ENCODE measurements at regions of chr1 and their contacts with region 1.

Region 1: DNA sequence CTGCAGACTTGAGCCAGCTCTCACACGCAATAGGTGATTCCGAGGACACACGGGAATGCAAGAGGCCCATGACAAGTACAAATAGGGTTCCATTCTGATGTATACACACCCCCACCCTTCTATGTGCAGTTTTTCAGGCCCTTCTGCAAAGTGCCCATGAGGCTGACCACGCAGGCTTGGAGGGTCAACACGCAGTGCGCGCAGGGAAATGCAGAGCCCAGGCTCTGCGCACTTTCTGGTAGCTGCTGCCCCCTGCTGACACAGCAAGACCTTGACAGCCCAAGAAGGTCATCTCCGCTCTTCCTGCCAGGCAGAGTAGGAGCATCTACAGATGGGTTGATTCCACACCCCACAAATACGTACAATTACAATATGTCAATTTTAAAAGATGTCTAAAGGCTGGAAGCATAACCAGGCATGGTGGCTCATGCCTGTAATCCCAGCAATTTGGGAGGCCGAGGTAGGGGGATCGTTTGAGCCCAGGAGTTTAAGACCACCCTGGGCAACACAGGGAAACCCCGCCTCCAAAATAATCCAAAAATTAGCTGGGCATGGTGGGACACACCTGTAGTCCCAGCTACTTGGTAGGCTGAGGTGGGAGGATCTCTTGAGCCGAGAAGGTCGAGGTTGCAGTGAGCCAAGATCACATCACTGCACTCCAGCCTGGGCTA is 18.5 kb downstream of the SH3BP5L start:
- DNase-seq: peak; percentile 6 to 90 (median 49)
- ATAC-seq: peak; percentile 85
- H3K4me3 ChIP-seq: no peak overlapping the region
- H3K27ac ChIP-seq: peak overlapping the region in 1 of 2 donors; percentile 15
- H3K4me1 ChIP-seq: peaks cover 0 to 63% of the 10 kb centered on the region in 2 donors
- H3K27me3 ChIP-seq: no peaks in the 10 kb centered on the region
- CTCF ChIP-seq: peak; percentile 75 to 78

Region 2: GRCh38 chr1:248627971-248628844 is 179.0 kb before region 1 on chr1:
- intact Hi-C with region 1: loop called in 1 of 2 experiments (anchors 5 kb)
- DNase-seq: no peak
- ATAC-seq: no peak
- H3K4me3 ChIP-seq: no peak overlapping the region
- H3K27ac ChIP-seq: no peak overlapping the region
- H3K4me1 ChIP-seq: no peaks in the 10 kb centered on the region
- H3K27me3 ChIP-seq: no peaks in the 10 kb centered on the region
- CTCF ChIP-seq: no peak

Region 3: GRCh38 chr1:248757784-248758195 is 49.4 kb before region 1 on chr1:
- intact Hi-C with region 1: no loop called
- DNase-seq: no peak
- ATAC-seq: no peak
- H3K4me3 ChIP-seq: no peak overlapping the region
- H3K27ac ChIP-seq: no peak overlapping the region
- H3K4me1 ChIP-seq: no peaks in the 10 kb centered on the region
- H3K27me3 ChIP-seq: no peaks in the 10 kb centered on the region
- CTCF ChIP-seq: no peak

Region 4: DNA sequence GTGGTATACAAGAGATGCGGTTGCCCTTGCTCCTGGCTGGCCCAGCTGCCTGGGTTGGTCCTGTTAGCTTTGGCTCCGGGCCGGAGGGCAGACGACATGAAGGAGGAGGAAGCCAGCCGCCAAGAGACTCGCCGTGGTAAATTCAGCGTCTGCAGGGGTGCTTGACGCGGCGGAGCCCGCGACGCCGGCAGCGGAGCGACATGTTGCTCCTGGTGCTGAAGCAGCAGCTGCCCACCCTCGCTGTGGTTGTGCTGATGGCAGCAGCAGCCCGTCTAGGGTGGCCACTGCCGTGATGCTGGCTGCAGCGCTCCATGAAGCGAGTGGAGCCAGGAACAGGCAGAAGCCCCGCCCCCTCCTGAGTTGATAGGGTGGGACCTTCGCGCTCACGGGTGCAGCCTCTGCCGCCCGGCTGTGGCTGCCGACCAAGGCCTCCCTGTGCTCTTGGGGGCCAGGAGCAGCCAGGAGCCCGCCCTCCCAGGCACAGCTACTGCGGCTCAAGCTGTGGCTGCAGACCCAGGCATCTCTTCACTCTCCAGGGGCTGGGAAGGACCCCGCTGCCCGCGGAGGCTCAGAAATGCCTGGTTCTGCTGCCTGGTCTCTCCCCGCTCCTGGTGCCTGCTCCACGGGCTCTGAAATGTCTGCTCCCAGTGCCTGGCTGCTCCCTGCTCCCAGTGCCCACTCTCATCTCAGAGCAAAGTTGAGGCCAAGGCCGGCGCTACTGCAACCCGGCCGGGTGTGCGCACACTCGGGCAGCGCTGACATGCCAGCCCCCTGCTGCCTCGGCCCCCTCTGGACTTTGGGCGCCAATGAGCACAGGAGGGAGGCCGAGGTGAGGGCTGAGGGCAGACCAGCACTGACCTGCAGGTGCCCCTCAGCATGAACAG is 56.0 kb after region 1 on chr1:
- intact Hi-C with region 1: no loop called
- DNase-seq: peak; percentile 70 to 95 (median 88)
- ATAC-seq: peak; percentile 79
- H3K4me3 ChIP-seq: peak overlapping the region; percentile 59 to 61
- H3K27ac ChIP-seq: peak overlapping the region; percentile 15 to 74
- H3K4me1 ChIP-seq: peaks cover 1 to 30% of the 10 kb centered on the region in 2 donors
- H3K27me3 ChIP-seq: no peaks in the 10 kb centered on the region
- CTCF ChIP-seq: no peak